ENCODE measurements at regions of chr16 and their contacts with region 1.

Region 1: GRCh38 chr16:15643048-15643945 is at the start of gene MARF1:
- DNase-seq: peak; percentile 100
- ATAC-seq: peak; percentile 63
- H3K4me3 Mint-ChIP-seq: peak within 1 kb of the TSS; percentile 94
- H3K27ac Mint-ChIP-seq: peak within 1 kb of the TSS; percentile 96
- H3K4me1 Mint-ChIP-seq: peaks cover 45% of the 10 kb centered on the region
- H3K27me3 Mint-ChIP-seq: no peaks in the 10 kb centered on the region
- total RNA-seq, gene MARF1: 111 to 114 TPM

Region 2: DNA sequence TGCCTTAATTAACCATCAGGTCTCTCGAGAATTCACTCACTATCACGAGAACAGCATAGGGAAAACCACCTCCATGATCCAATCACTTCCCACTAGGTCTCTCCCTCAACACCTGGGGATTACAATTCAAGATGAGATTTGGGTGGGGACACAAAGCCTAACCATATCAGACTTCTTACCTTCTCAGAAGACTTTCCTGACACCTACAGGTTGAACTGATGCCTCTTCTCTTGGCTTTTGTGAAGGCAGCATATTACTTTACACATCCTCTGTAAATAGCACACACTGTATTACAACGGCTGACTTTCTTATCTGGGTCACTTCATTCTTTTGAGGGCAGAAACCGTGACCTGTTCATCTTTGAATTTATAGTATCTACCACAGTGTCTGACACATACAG is 185.3 kb before region 1 on chr16:
- POLR2A ChIA-PET with region 1: no interaction called
- DNase-seq: no peak
- ATAC-seq: no peak
- H3K4me3 Mint-ChIP-seq: no peak overlapping the region
- H3K27ac Mint-ChIP-seq: no peak overlapping the region
- H3K4me1 Mint-ChIP-seq: no peaks in the 10 kb centered on the region
- H3K27me3 Mint-ChIP-seq: peaks cover 3% of the 10 kb centered on the region

Region 3: DNA sequence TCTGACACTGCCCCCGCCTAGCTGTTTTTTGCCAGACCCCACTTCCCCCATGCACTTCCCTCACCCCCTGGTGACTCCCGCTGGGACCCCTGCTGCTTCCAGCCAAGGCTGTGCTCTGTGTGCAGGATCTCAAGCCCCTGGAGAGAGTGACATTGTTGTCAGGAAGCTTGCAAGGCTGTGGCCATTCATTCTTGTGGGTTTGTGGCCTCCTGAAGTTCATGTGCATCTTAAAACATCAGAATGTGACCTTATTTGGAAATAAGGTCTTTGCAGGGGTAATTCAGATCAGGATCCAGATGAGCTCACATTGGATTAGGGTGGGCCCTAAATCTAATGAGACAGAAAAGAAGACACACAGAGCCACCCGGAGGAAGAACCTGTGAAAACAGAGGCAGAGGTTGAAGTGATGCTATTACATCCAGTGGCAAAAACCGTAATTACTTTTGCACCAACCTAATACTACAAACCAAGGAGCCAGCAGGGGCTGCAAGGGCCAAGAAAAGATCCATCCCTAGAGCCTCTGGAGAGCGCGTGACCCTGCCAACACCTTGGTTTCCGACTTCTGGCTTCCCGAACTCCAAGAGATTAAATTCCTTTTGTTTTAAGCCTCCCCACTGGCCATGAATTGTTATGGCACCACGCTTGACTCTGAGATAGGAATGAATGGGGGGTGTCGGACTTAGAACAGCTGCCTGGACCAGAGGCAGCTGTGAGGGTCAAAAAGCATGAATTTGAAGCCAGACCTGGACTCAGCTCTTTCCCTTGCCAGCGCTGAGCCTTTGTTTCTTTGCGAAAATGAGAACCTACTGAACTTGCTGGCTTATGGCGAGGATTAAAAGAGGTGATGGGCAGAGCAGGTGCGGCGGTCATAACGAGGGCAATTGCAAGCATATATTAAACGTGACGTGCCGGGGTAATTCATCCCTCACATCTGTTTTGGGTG is 133.4 kb before region 1 on chr16:
- POLR2A ChIA-PET with region 1: interaction called, 10 read pairs
- DNase-seq: peak; percentile 43
- ATAC-seq: peak; percentile 72
- H3K4me3 Mint-ChIP-seq: peak overlapping the region; percentile 26
- H3K27ac Mint-ChIP-seq: peak overlapping the region; percentile 46
- H3K4me1 Mint-ChIP-seq: peaks cover 22% of the 10 kb centered on the region
- H3K27me3 Mint-ChIP-seq: peaks cover 6% of the 10 kb centered on the region

Region 4: DNA sequence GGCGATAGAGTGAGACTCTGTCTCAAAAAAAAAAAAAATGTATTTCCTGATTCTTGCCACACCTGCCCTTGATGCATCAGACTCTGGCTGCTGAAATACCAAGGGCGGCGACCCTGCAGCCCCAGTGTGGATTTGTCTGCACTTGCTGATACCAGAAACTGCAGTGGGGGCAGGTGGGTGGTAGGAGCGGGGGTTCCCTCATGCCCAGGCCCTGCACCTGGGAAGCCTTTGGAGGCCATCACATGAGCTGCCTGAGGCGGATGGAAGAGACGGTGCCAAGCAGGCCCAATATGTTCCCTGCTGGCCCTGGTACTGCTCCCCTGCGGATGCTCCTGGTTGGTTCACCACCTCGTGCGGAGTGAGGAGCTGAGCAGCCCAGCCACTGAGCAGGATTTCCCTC is 51.0 kb before region 1 on chr16:
- POLR2A ChIA-PET with region 1: interaction called, 33 read pairs
- DNase-seq: no peak
- ATAC-seq: no peak
- H3K4me3 Mint-ChIP-seq: no peak overlapping the region
- H3K27ac Mint-ChIP-seq: peak overlapping the region; percentile 55
- H3K4me1 Mint-ChIP-seq: peaks cover 16% of the 10 kb centered on the region
- H3K27me3 Mint-ChIP-seq: no peaks in the 10 kb centered on the region

Region 5: GRCh38 chr16:15607700-15608396 is 35.4 kb before region 1 on chr16:
- POLR2A ChIA-PET with region 1: no interaction called
- DNase-seq: no peak
- ATAC-seq: no peak
- H3K4me3 Mint-ChIP-seq: no peak overlapping the region
- H3K27ac Mint-ChIP-seq: no peak overlapping the region
- H3K4me1 Mint-ChIP-seq: peaks cover 11% of the 10 kb centered on the region
- H3K27me3 Mint-ChIP-seq: no peaks in the 10 kb centered on the region

Region 6: DNA sequence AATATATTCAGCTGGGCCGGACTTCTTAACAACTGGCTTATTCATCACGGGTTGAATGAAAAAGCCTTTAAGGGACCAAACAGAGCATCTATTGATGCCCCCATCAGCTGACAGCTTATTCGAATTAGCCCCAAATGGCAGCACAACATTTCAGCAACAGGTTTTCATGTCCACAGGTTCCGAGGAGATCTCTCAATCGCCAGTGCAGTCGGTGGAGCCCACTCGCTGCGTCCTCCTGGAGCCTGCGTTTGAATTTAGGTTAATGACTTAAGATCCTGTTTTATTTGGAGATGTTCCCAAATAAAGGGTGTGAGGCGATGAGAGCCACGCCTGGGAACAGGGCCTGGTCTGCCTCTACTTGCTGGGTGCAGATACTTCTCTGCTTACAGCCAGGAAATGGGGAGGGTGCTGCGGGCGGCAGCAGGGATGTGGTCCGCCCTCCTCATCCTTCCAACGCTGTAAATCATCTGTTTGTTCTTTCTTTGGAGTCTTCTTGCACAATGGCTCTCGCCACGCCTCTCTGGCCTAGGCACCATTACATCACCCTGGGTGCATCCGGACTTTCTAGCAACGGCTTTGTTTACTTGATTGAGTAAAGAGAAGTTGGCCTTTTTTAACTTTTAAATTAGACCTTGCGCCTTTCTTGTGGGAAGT is 29.3 kb after region 1 on chr16:
- POLR2A ChIA-PET with region 1: interaction called, 35 read pairs
- DNase-seq: peak; percentile 77
- ATAC-seq: peak; percentile 97
- H3K4me3 Mint-ChIP-seq: peak overlapping the region; percentile 80
- H3K27ac Mint-ChIP-seq: peak overlapping the region; percentile 98
- H3K4me1 Mint-ChIP-seq: peaks cover 43% of the 10 kb centered on the region
- H3K27me3 Mint-ChIP-seq: no peaks in the 10 kb centered on the region

Region 7: GRCh38 chr16:15682105-15682570 is 38.8 kb after region 1 on chr16:
- POLR2A ChIA-PET with region 1: interaction called, 10 read pairs
- DNase-seq: no peak
- ATAC-seq: peak; percentile 77
- H3K4me3 Mint-ChIP-seq: no peak overlapping the region
- H3K27ac Mint-ChIP-seq: no peak overlapping the region
- H3K4me1 Mint-ChIP-seq: peaks cover 5% of the 10 kb centered on the region
- H3K27me3 Mint-ChIP-seq: no peaks in the 10 kb centered on the region